ENCODE measurements at regions of chr2 and their contacts with region 1.

Region 1: GRCh38 chr2:196639180-196640030 is at the start of gene CCDC150:
- DNase-seq: peak; percentile 89 to 96 (median 94)
- ATAC-seq: peak; percentile 100
- H3K4me3 ChIP-seq: peak within 1 kb of the TSS; percentile 68 to 85
- H3K4me3 Mint-ChIP-seq: peak within 1 kb of the TSS; percentile 86
- H3K27ac ChIP-seq: peak within 1 kb of the TSS; percentile 12 to 27
- H3K27ac Mint-ChIP-seq: peak within 1 kb of the TSS; percentile 38
- H3K4me1 ChIP-seq: peaks cover 7% of the 10 kb centered on the region
- H3K4me1 Mint-ChIP-seq: peaks cover 13% of the 10 kb centered on the region
- H3K27me3 ChIP-seq: no peaks in the 10 kb centered on the region
- H3K27me3 Mint-ChIP-seq: no peaks in the 10 kb centered on the region
- CTCF ChIP-seq: no peak
- total RNA-seq, gene CCDC150: 0.72 to 0.81 TPM

Region 2: GRCh38 chr2:196291873-196292800 is 347.3 kb before region 1 on chr2:
- CTCF ChIA-PET with region 1: no interaction called
- POLR2A ChIA-PET with region 1: no interaction called
- intact Hi-C with region 1: loop called in 1 of 2 experiments (anchors 10 kb)
- DNase-seq: peak in 2 of 9 experiments; percentile 31 to 56
- ATAC-seq: no peak
- H3K4me3 ChIP-seq: no peak overlapping the region
- H3K4me3 Mint-ChIP-seq: no peak overlapping the region
- H3K27ac ChIP-seq: peak overlapping the region in 1 of 2 experiments; percentile 17
- H3K27ac Mint-ChIP-seq: no peak overlapping the region
- H3K4me1 ChIP-seq: peaks cover 15% of the 10 kb centered on the region
- H3K4me1 Mint-ChIP-seq: peaks cover 28% of the 10 kb centered on the region
- H3K27me3 ChIP-seq: no peaks in the 10 kb centered on the region
- H3K27me3 Mint-ChIP-seq: no peaks in the 10 kb centered on the region
- CTCF ChIP-seq: no peak

Region 3: GRCh38 chr2:196515051-196515450 is 124.4 kb before region 1 on chr2:
- CTCF ChIA-PET with region 1: no interaction called
- POLR2A ChIA-PET with region 1: no interaction called
- intact Hi-C with region 1: no loop called
- DNase-seq: no peak
- ATAC-seq: no peak
- H3K4me3 ChIP-seq: no peak overlapping the region
- H3K4me3 Mint-ChIP-seq: no peak overlapping the region
- H3K27ac ChIP-seq: no peak overlapping the region
- H3K27ac Mint-ChIP-seq: no peak overlapping the region
- H3K4me1 ChIP-seq: no peaks in the 10 kb centered on the region
- H3K4me1 Mint-ChIP-seq: no peaks in the 10 kb centered on the region
- H3K27me3 ChIP-seq: peaks cover 0 to 2% of the 10 kb centered on the region in 2 experiments
- H3K27me3 Mint-ChIP-seq: peaks cover 17% of the 10 kb centered on the region
- CTCF ChIP-seq: no peak

Region 4: DNA sequence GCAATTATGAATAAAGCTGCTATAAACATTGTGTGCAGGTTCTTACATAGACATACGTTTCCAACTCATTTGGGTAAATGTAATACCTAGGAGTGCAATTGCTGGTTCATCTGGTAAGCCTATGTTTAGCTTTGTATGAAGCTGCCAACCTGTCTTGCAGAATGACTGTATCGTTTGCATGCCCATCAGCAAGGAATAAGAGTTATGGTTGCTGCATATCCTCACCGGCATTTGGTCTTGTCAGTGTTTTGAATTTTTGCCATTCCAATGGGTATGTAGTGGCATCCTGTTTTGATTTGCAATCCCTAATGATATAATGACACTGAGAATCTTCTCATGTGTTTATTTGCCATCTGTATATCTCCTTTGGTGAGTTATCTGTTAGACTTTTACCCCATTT is 20.8 kb after region 1 on chr2:
- CTCF ChIA-PET with region 1: no interaction called
- POLR2A ChIA-PET with region 1: no interaction called
- intact Hi-C with region 1: no loop called
- DNase-seq: no peak
- ATAC-seq: no peak
- H3K4me3 ChIP-seq: no peak overlapping the region
- H3K4me3 Mint-ChIP-seq: no peak overlapping the region
- H3K27ac ChIP-seq: no peak overlapping the region
- H3K27ac Mint-ChIP-seq: no peak overlapping the region
- H3K4me1 ChIP-seq: no peaks in the 10 kb centered on the region
- H3K4me1 Mint-ChIP-seq: no peaks in the 10 kb centered on the region
- H3K27me3 ChIP-seq: no peaks in the 10 kb centered on the region
- H3K27me3 Mint-ChIP-seq: peaks cover 2% of the 10 kb centered on the region
- CTCF ChIP-seq: no peak

Region 5: GRCh38 chr2:196926562-196927375 is 287.4 kb after region 1 on chr2 and contains the start of gene PGAP1:
- CTCF ChIA-PET with region 1: no interaction called
- POLR2A ChIA-PET with region 1: no interaction called
- intact Hi-C with region 1: loop called in 1 of 2 experiments (anchors 10 kb)
- DNase-seq: peak; percentile 65 to 91 (median 81)
- ATAC-seq: peak; percentile 74
- H3K4me3 ChIP-seq: peak within 1 kb of the TSS; percentile 88 to 96
- H3K4me3 Mint-ChIP-seq: peak within 1 kb of the TSS; percentile 97
- H3K27ac ChIP-seq: peak within 1 kb of the TSS; percentile 66 to 69
- H3K27ac Mint-ChIP-seq: peak within 1 kb of the TSS; percentile 90
- H3K4me1 ChIP-seq: peaks cover 23% of the 10 kb centered on the region
- H3K4me1 Mint-ChIP-seq: peaks cover 33% of the 10 kb centered on the region
- H3K27me3 ChIP-seq: no peaks in the 10 kb centered on the region
- H3K27me3 Mint-ChIP-seq: no peaks in the 10 kb centered on the region
- CTCF ChIP-seq: no peak
- total RNA-seq, gene PGAP1: 11.6 to 12.3 TPM

Region 6: DNA sequence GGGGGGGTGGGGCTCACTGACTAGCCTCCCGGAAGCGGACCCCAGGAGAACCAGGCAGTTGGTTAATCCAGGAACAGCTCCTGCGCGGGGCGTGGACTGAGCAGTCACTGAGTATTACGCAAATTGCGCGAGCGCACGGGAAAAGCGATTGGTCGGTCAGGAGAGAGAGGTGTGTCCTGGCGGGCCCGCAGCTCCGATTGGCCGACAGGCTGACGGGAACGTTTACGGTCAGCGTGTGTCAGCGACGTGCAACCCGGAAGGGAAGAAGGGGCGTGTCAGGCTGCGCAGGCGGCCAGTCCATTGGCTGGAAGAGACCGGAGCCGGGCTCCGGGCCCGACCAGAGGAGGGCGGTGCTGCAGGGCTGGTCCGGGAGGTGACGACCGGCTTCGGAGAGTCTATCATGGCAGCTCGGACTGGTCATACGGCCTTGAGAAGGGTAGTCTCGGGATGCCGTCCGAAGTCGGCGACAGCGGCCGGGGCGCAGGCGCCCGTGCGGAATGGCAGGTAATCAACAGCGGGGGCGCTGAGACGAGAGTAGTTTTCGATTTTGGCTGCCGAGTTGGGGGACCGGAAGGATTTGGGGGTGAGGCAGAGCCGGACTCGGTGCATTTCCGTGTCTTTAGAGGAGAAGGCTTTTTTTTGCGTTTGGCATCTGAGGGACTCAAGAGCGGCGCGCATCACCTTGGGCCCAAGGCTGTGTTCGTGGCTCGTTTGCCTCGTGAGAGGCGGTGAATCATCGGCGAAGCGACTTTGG is 813.9 kb after region 1 on chr2 and contains the start of gene COQ10B:
- CTCF ChIA-PET with region 1: no interaction called
- POLR2A ChIA-PET with region 1: no interaction called
- intact Hi-C with region 1: loop called in 1 of 2 experiments (anchors 5 kb)
- DNase-seq: peak; percentile 95 to 100 (median 97)
- ATAC-seq: peak; percentile 87
- H3K4me3 ChIP-seq: peak within 1 kb of the TSS; percentile 62 to 74
- H3K4me3 Mint-ChIP-seq: peak within 1 kb of the TSS; percentile 99
- H3K27ac ChIP-seq: peak within 1 kb of the TSS; percentile 93 to 95
- H3K27ac Mint-ChIP-seq: peak within 1 kb of the TSS; percentile 100
- H3K4me1 ChIP-seq: peaks cover 28% of the 10 kb centered on the region
- H3K4me1 Mint-ChIP-seq: peaks cover 48% of the 10 kb centered on the region
- H3K27me3 ChIP-seq: no peaks in the 10 kb centered on the region
- H3K27me3 Mint-ChIP-seq: no peaks in the 10 kb centered on the region
- CTCF ChIP-seq: no peak
- total RNA-seq, gene COQ10B: 66.9 to 67.6 TPM

Region 7: GRCh38 chr2:197804049-197804757 is 1164.8 kb after region 1 on chr2 and contains the start of gene PLCL1:
- CTCF ChIA-PET with region 1: no interaction called
- POLR2A ChIA-PET with region 1: no interaction called
- intact Hi-C with region 1: loop called in 1 of 2 experiments (anchors 2 kb)
- DNase-seq: peak; percentile 77 to 94 (median 88)
- ATAC-seq: peak; percentile 98
- H3K4me3 ChIP-seq: peak within 1 kb of the TSS; percentile 67 to 70
- H3K4me3 Mint-ChIP-seq: peak within 1 kb of the TSS; percentile 92
- H3K27ac ChIP-seq: peak within 1 kb of the TSS in 1 of 2 experiments; percentile 53
- H3K27ac Mint-ChIP-seq: peak within 1 kb of the TSS; percentile 89
- H3K4me1 ChIP-seq: peaks cover 44% of the 10 kb centered on the region
- H3K4me1 Mint-ChIP-seq: peaks cover 44% of the 10 kb centered on the region
- H3K27me3 ChIP-seq: no peaks in the 10 kb centered on the region
- H3K27me3 Mint-ChIP-seq: no peaks in the 10 kb centered on the region
- CTCF ChIP-seq: no peak
- total RNA-seq, gene PLCL1: 8.2 to 8.3 TPM

Measured in CD8-positive, alpha-beta T cell (primary cell).